ENCODE measurements at regions of chr21 and their contacts with region 1.

Region 1: DNA sequence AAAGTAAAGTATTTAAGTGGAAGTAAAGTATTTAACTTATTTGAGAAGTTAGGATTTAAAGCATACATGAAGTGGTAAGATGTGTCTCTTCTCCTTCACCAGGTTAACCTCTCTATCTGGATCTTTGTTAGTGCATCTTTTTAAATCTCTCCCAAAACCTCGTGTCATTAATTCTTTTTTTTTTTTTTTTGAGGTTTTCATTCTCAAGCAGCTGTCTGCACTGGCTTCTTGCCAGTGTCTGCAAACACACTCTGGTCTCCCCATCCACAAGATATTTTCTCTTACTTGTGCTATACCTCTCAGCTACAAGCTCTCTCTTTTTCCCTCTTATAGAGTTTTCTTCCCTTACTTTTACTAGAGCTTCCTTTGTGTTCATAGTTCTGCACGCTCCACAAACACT is 49.0 kb downstream of the CLDN17 start:
- DNase-seq: no peak

Region 2: GRCh38 chr21:30168086-30168485 is 50.5 kb after region 1 on chr21:
- intact Hi-C with region 1: loop called (anchors 10 kb)
- DNase-seq: no peak

Measured in head of caudate nucleus (tissue), 42 donors.